BJ (cell line): ENCODE measurements at regions of chr3 and their contacts with region 1.

Region 1: DNA sequence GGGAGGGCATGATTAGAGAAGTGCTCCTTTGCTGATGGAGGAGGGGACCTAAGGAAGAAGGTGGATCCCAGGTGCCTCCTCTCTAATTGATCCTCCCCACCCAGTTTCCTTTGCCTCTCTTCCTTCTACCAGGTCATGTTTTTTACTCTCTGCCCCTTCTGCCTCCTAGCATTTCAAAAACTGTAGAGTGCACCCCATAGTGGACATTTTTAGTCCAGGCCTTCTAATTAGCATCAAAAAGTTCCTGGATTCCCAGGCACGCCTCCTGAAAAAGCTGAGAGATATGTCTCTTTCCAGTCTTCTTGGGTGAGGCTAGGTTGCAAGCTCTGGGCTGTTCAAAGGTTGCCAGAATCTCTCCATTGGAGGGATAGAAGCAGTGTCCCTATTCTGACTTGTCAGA is 18.7 kb upstream of the ITGB5 start:
- DNase-seq: no peak
- H3K4me3 ChIP-seq: no peak overlapping the region
- H3K27me3 ChIP-seq: peaks cover 4% of the 10 kb centered on the region; the same call in 1 of the 2 replicates
- CTCF ChIP-seq: no peak; the same call in 1 of the 2 replicates

Region 2: GRCh38 chr3:124761250-124761796 is 144.5 kb before region 1 on chr3:
- CTCF ChIA-PET with region 1: interaction called, 223 read pairs
- POLR2A ChIA-PET with region 1: no interaction called
- DNase-seq: peak; percentile 49
- H3K4me3 ChIP-seq: no peak overlapping the region
- H3K27me3 ChIP-seq: no peaks in the 10 kb centered on the region
- CTCF ChIP-seq: peak; percentile 96

Region 3: GRCh38 chr3:124780761-124781475 is 124.9 kb before region 1 on chr3:
- CTCF ChIA-PET with region 1: interaction called, 79 read pairs
- POLR2A ChIA-PET with region 1: no interaction called
- DNase-seq: no peak
- H3K4me3 ChIP-seq: no peak overlapping the region
- H3K27me3 ChIP-seq: no peaks in the 10 kb centered on the region
- CTCF ChIP-seq: no peak

Region 4: GRCh38 chr3:124791639-124792151 is 114.2 kb before region 1 on chr3:
- CTCF ChIA-PET with region 1: interaction called, 79 read pairs
- POLR2A ChIA-PET with region 1: no interaction called
- DNase-seq: peak; percentile 93
- H3K4me3 ChIP-seq: no peak overlapping the region
- H3K27me3 ChIP-seq: no peaks in the 10 kb centered on the region
- CTCF ChIP-seq: no peak

Region 5: DNA sequence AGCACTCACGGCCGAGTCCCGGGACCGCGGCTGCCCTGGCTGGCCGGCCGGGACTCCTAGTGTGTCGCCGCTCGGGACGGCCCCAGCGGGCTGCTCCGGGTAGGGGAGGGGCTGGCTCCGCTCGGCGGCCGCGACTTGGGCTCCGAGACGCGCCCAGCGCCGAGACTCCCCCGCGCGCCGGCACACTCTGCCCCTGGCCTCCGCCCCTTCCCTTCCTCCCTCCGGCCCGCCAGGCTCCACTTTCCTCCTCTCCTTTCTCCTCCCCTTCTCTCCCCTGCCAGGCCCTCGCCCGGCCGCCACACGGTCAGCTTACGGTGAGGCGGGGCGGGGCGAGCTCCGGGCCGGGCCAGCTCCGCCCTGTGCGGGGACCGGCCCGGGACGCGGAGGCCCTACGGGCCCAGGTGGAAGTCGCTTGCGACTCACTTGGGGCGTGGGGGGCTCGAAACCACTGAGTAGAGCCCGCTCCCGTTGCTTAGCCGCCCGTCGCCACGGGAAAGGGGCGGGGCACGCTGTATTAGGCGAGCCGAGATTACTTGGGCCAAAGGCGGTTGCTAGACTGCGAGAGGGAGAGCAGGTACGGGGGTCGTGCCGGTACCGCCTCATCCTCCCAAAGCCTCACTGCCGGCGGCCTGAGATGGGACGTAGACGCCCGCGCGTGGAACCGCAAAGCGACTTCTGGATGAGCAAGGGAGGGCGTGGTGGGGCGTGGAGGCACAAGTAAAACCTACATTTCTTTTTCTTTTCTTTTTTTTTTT is 18.5 kb before region 1 on chr3 and contains the start of gene ITGB5:
- CTCF ChIA-PET with region 1: interaction called, 14 read pairs
- POLR2A ChIA-PET with region 1: no interaction called
- DNase-seq: peak; percentile 36
- H3K4me3 ChIP-seq: peak within 1 kb of the TSS; percentile 72
- H3K27me3 ChIP-seq: no peaks in the 10 kb centered on the region
- CTCF ChIP-seq: no peak
- polyA plus RNA-seq, gene ITGB5: 223 and 393 TPM in 2 replicates

Region 6: GRCh38 chr3:125186261-125186787 is 280.5 kb after region 1 on chr3:
- CTCF ChIA-PET with region 1: no interaction called
- POLR2A ChIA-PET with region 1: no interaction called
- DNase-seq: no peak
- H3K4me3 ChIP-seq: no peak overlapping the region
- H3K27me3 ChIP-seq: no peaks in the 10 kb centered on the region
- CTCF ChIP-seq: no peak

Region 7: GRCh38 chr3:125585595-125586223 is 679.9 kb after region 1 on chr3:
- CTCF ChIA-PET with region 1: interaction called, 11 read pairs
- POLR2A ChIA-PET with region 1: no interaction called
- DNase-seq: peak; percentile 15
- H3K4me3 ChIP-seq: no peak overlapping the region
- H3K27me3 ChIP-seq: no peaks in the 10 kb centered on the region
- CTCF ChIP-seq: peak; percentile 86